ENCODE measurements at regions of chr1 and their contacts with region 1.

Region 1: DNA sequence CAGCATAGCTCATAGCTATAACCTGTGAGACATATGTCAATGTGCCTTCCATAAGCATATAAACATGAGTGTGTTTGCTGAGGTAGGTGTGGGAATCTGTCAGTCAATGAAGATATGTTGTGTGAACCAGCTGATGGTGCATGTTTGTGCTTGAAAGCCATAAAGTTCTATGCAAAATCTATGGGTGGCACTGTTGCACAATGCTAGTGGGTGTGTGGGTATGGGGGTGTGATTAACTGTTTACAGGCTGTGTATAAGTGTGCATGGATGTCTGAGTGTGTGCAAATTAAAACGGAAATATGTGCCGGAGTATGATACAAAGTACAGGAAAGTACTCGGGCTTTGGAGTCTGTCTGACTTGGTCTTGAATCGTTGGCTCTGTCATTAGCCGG is 1.0 kb upstream of the ATP2B4 start:
- DNase-seq: peak in 3 of 6 donors; percentile 51 to 60 (median 59)
- ATAC-seq: peak; percentile 56 to 72 (median 70)
- H3K4me3 ChIP-seq: no peak overlapping the region
- H3K27ac ChIP-seq: peak overlapping the region in 2 of 4 donors; percentile 48 to 75
- H3K4me1 ChIP-seq: peaks cover 0 to 17% (median 10%) of the 10 kb centered on the region in 3 donors
- H3K27me3 ChIP-seq: no peaks in the 10 kb centered on the region
- CTCF ChIP-seq: peak in 2 of 4 donors; percentile 15 to 19

Region 2: DNA sequence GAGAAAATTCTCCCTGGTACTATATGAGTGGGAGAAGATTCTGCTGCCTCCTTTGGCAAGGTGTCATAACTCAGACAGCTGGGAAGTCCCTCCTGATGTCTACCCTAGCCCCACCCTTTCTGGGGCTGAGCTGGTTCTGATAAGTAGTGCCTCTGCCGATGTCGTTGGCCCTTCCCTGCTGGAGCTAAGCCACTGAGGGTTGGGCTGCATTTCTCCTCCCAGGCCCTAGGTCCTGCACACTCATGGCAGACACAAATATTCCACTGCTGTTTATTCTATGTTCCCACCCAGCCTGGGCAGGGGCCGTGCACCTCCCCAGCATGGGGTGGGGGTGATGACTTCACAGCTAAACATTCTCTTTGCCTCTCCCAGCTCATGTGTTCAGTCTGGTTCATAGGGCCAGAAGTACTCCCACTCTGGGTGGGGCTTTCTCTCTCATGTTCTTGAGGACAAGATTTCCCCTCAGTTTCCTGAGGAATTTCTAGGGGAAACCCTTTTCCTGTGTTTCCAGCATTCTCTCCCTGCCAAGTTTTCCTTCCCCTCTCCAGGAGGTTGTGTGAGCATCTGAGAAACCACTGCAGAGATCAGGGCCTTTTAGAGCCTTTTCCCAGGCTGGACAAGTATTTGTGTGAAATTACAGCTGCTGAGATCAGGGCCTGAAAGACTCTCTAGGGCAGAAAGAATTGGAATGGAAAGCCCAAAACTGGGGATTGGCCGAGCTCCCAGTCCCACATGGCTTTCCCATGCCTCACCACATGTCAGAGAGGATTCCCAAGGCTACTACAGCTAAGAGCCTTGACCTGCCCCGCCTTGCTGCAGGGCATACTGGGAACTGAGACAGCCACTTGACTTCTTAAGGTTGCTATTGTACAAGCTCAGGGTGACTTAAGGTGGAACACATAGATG is 67.2 kb after region 1 on chr1:
- intact Hi-C with region 1: loop called in 2 of 3 experiments (anchors 5 kb)
- DNase-seq: peak in 5 of 6 donors; percentile 71 to 82 (median 79)
- ATAC-seq: peak; percentile 85 to 96 (median 90)
- H3K4me3 ChIP-seq: no peak overlapping the region
- H3K27ac ChIP-seq: peak overlapping the region; percentile 53 to 66 (median 56)
- H3K4me1 ChIP-seq: peaks cover 9 to 14% (median 12%) of the 10 kb centered on the region in 3 donors
- H3K27me3 ChIP-seq: no peaks in the 10 kb centered on the region
- CTCF ChIP-seq: no peak

Region 3: GRCh38 chr1:203744075-203744972 is 118.7 kb after region 1 on chr1:
- intact Hi-C with region 1: no loop called
- DNase-seq: no peak
- ATAC-seq: peak in 3 of 4 donors; percentile 55 to 76 (median 63)
- H3K4me3 ChIP-seq: no peak overlapping the region
- H3K27ac ChIP-seq: no peak overlapping the region
- H3K4me1 ChIP-seq: no peaks in the 10 kb centered on the region
- H3K27me3 ChIP-seq: no peaks in the 10 kb centered on the region
- CTCF ChIP-seq: no peak

Measured in pancreas (tissue), 10 donors.